H1 (cell line): ENCODE measurements at regions of chr7 and their contacts with region 1.

Region 1: GRCh38 chr7:4791738-4792536 is 16.5 kb downstream of the AP5Z1 start:
- DNase-seq: peak; percentile 83 to 99
- H3K4me3 ChIP-seq: peak overlapping the region; percentile 46 to 71 (median 52)
- H3K27ac ChIP-seq: 0 out of 2 replicates have a peak overlapping the region, but pooled peaks have one; percentile 27
- H3K4me1 ChIP-seq: peaks cover 0 to 3% (median 1%) of the 10 kb centered on the region in 4 experiments; a peak in 4 of 7 replicates
- H3K27me3 ChIP-seq: no peaks in the 10 kb centered on the region
- CTCF ChIP-seq: peak in 2 of 3 experiments; percentile 79 to 83; a peak in 3 of 4 replicates
- EP300 ChIP-seq: no peak
- POLR2A ChIP-seq: no peak
- RAD21 ChIP-seq: peak; percentile 33 to 47; a peak in 2 of 4 replicates

Region 2: DNA sequence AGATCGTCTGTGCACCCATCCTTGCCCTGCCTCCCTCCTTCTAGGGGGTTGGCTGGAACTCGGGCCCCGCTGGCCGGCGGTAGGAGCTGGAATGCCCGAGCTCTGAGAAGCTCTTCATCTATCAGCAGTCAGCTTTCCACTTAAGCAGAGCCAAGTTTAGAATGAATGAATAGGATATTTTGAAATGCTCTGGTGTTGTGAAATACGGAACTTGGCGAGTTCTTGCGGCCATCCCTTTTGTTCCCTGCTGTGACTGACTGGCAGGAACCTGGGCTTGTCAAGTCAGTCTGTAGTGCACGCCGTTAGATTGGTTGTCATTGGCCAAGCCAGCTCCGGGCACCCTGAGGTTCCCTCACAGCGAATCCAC is 76.5 kb before region 1 on chr7:
- CTCF ChIA-PET with region 1: no interaction called
- POLR2A ChIA-PET with region 1: no interaction called
- DNase-seq: no peak
- H3K4me3 ChIP-seq: no peak overlapping the region
- H3K27ac ChIP-seq: no peak overlapping the region
- H3K4me1 ChIP-seq: no peaks in the 10 kb centered on the region
- H3K27me3 ChIP-seq: peaks cover 13 to 35% (median 28%) of the 10 kb centered on the region in 4 experiments
- CTCF ChIP-seq: no peak
- EP300 ChIP-seq: no peak
- POLR2A ChIP-seq: no peak
- RAD21 ChIP-seq: no peak

Region 3: DNA sequence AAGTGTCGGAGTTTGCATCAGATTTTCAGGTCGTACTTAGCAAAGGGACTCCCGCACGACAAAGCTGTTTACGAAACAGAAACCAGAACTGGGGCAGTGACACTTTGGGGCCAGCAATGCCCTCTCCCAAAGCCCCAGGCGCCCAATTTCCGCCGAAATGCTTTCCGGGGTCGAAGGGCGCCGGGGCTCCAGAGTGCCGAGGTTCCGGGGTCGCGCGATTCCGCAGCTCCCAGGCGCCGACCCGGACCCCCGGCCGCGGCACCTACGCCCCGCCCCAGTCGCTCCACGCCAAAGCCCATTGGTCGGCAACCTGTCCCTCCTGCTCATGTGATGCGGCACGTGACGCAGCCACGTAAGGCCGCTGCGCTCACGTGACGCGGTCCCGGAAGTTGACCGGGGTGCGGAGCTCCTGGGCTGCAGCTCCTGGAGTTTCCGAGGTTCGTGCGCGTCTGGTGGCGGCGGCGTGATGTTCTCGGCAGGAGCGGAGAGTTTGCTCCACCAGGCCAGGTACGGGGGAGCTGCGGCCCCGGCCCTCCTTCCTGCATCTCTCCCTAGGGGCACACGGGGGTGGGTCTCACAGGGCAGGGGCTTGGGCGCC is 16.6 kb before region 1 on chr7 and contains the start of gene AP5Z1:
- CTCF ChIA-PET with region 1: interaction called, 11 read pairs
- POLR2A ChIA-PET with region 1: interaction called, 10 read pairs
- DNase-seq: peak; percentile 82 to 94
- H3K4me3 ChIP-seq: peak within 1 kb of the TSS; percentile 82 to 99 (median 98)
- H3K27ac ChIP-seq: peak within 1 kb of the TSS; percentile 54; the same call in 1 of the 2 replicates
- H3K4me1 ChIP-seq: peaks cover 0 to 5% (median 4%) of the 10 kb centered on the region in 4 experiments; a peak in 3 of 7 replicates
- H3K27me3 ChIP-seq: 0 out of 7 replicates have a peak, but pooled peaks cover 0 to 2% (median 0%) of the 10 kb centered on the region in 4 experiments
- CTCF ChIP-seq: no peak
- EP300 ChIP-seq: peak in 1 of 2 experiments; percentile 76; a peak in 1 of 3 replicates
- POLR2A ChIP-seq: peak in 1 of 2 experiments; percentile 78; a peak in 2 of 3 replicates
- RAD21 ChIP-seq: no peak; a peak in 1 of 4 replicates
- total RNA-seq, gene AP5Z1: 21.9 and 24.7 TPM in 2 replicates

Region 4: GRCh38 chr7:4819560-4820404 is 27.8 kb after region 1 on chr7:
- CTCF ChIA-PET with region 1: interaction called, 59 read pairs
- POLR2A ChIA-PET with region 1: no interaction called
- DNase-seq: no peak
- H3K4me3 ChIP-seq: no peak overlapping the region
- H3K27ac ChIP-seq: no peak overlapping the region
- H3K4me1 ChIP-seq: no peaks in the 10 kb centered on the region
- H3K27me3 ChIP-seq: no peaks in the 10 kb centered on the region
- CTCF ChIP-seq: no peak
- EP300 ChIP-seq: no peak
- POLR2A ChIP-seq: no peak
- RAD21 ChIP-seq: no peak

Region 5: DNA sequence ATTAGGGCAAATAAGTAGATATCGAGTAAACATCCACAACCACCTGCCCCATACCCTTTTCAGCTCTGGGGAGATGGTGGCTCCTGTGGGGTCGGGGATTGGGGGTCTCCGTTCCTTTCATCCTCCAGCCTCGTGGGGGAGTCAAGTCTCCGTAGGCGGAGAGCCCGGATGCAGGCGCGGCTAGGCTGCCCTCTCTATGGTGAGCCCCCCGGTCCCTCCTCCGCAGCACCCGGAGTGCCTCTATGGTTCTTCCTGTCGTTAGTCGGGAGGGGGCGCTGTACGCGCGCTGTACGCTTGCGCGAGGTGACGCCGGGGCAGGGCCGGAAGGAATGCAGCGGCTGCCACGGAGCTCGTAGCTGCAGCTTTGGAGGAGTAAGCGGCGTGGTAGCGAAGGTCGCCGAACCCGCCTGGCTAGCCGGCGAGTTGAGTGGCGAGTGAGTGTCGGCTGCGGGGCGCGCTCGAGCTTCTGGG is 181.8 kb after region 1 on chr7:
- CTCF ChIA-PET with region 1: interaction called, 14 read pairs
- POLR2A ChIA-PET with region 1: no interaction called
- DNase-seq: peak; percentile 85 to 97
- H3K4me3 ChIP-seq: peak overlapping the region; percentile 54 to 85 (median 63)
- H3K27ac ChIP-seq: no peak overlapping the region
- H3K4me1 ChIP-seq: no peaks in the 10 kb centered on the region
- H3K27me3 ChIP-seq: no peaks in the 10 kb centered on the region
- CTCF ChIP-seq: peak; percentile 54 to 86 (median 85)
- EP300 ChIP-seq: no peak
- POLR2A ChIP-seq: peak; percentile 47 to 69; a peak in 2 of 3 replicates
- RAD21 ChIP-seq: peak; percentile 67 to 69

Region 6: DNA sequence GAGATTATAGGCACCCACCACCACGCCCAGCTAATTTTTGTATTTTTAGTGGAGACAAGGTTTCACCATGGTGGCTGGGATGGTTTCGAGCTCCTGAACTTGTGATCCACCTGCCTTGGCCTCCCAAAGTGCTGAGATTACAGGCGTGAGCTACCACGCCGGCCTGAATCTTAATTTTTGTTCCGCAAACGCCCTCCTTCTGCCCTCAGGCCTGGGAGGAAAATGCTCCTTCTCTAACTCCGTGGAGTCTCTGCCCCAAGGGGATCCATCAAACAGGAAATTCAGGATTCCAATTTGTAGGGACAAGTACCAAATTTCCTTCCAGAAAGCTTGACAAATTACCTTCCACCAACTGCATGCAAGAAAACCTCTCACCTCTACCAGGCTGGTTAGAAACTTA is 297.0 kb after region 1 on chr7:
- CTCF ChIA-PET with region 1: interaction called, 65 read pairs
- POLR2A ChIA-PET with region 1: no interaction called
- DNase-seq: no peak
- H3K4me3 ChIP-seq: no peak overlapping the region
- H3K27ac ChIP-seq: no peak overlapping the region
- H3K4me1 ChIP-seq: no peaks in the 10 kb centered on the region
- H3K27me3 ChIP-seq: 0 out of 7 replicates have a peak, but pooled peaks cover 0 to 3% (median 1%) of the 10 kb centered on the region in 4 experiments
- CTCF ChIP-seq: no peak
- EP300 ChIP-seq: no peak
- POLR2A ChIP-seq: no peak
- RAD21 ChIP-seq: no peak